ENCODE measurements at regions of chr6 and their contacts with region 1.

Region 1: GRCh38 chr6:37691904-37692806 is 5.5 kb downstream of the MDGA1 start:
- DNase-seq: peak; percentile 70
- H3K4me3 ChIP-seq: no peak overlapping the region
- H3K27ac ChIP-seq: no peak overlapping the region
- H3K4me1 ChIP-seq: peaks cover 23% of the 10 kb centered on the region
- H3K27me3 ChIP-seq: peaks cover 51% of the 10 kb centered on the region
- CTCF ChIP-seq: peak; percentile 96

Region 2: DNA sequence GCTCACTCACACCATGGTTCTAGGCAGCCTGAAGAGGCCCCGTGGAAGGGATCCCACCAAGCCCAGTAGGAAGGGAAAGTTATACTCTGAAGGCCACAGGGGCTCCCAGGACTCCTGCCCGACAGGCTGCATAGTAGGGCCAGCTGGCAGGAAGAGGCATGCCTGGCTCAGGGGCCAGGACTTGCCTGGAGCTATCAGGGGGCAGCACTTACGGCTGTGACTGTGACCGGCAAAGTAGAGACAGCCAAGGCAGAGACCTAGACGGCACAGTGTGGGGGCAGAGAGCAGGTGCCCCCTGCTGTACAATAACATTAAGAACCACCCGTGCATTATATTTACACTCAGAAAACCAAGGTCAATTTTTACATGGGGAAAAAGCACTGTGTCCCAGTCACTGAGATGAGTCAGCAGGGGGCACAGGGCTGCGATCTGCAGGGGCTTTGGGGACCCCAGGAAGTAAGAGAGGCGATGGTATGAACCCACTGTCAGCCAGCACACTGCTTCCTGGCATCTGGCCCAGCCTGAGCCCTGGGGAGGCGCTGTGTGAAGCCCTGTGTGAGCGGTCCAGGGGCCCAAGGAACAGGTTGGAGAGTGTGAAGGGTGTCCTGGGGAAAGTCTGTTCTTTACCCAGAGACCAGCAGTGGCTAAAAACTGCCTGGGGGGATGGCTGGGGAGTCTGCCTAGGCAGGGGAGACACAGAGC is 202.3 kb before region 1 on chr6:
- intact Hi-C with region 1: loop called (anchors 5 kb)
- DNase-seq: no peak
- H3K4me3 ChIP-seq: no peak overlapping the region
- H3K27ac ChIP-seq: peak overlapping the region; percentile 12
- H3K4me1 ChIP-seq: peaks cover 47% of the 10 kb centered on the region
- H3K27me3 ChIP-seq: no peaks in the 10 kb centered on the region
- CTCF ChIP-seq: peak; percentile 14

Region 3: DNA sequence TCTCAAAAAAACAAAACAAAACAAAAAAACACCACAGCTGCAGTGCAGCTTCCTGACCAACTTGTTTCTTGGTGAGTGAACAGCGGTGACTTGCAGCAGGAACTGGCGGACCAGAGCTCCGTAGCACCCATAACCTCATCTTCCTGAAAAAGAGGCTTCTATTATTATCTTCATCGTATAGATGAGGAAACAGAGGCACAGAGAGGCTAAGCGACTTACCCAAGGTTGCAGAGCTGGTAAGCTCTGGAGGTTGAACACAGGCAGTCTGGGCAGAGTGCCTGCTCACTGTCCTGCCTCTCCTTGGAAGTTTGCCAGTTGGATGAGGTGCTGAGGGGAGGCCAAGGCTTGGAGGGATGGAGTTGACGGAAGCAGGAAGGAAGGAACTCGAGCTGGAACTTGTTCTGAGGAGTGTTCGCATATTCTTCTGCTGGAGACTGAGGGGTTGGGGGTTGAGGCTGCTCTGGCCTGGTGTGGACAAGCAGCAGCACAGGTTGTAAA is 144.5 kb before region 1 on chr6:
- intact Hi-C with region 1: no loop called
- DNase-seq: no peak
- H3K4me3 ChIP-seq: no peak overlapping the region
- H3K27ac ChIP-seq: no peak overlapping the region
- H3K4me1 ChIP-seq: peaks cover 9% of the 10 kb centered on the region
- H3K27me3 ChIP-seq: no peaks in the 10 kb centered on the region
- CTCF ChIP-seq: no peak

Measured in left ventricle myocardium inferior (tissue), 1 donor.